ENCODE measurements at regions of chr17 and their contacts with region 1.

Region 1: DNA sequence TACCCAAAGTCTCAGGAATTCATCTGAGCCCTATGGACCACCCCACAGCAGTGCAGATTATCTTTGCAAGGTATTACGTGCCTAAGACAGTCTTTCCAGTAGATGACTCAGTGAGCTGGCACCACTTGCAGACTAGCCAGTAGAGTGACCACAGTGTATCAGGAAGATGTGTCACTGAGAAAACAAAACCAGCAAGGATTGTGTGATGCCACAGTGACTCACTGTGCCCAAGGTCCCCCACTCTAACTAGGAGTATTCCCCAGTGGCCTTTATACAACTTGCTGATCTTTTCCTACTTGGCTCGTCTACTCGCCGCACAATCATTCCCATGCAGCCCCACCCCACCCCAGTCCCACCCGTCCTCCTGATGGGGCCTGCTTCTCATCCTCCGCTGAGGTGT is 26.8 kb upstream of the PRKCA start:
- DNase-seq: peak; percentile 100
- ATAC-seq: peak; percentile 91
- H3K4me3 ChIP-seq: no peak overlapping the region; the same call in 1 of the 2 replicates
- H3K27ac ChIP-seq: peak overlapping the region; percentile 98
- H3K4me1 ChIP-seq: peaks cover 50% of the 10 kb centered on the region
- H3K27me3 ChIP-seq: no peaks in the 10 kb centered on the region
- CTCF ChIP-seq: no peak

Region 2: GRCh38 chr17:66043456-66043855 is 232.2 kb before region 1 on chr17:
- CTCF ChIA-PET with region 1: no interaction called
- POLR2A ChIA-PET with region 1: no interaction called
- intact Hi-C with region 1: no loop called
- DNase-seq: peak; percentile 4
- ATAC-seq: peak; percentile 90
- H3K4me3 ChIP-seq: no peak overlapping the region
- H3K27ac ChIP-seq: no peak overlapping the region
- H3K4me1 ChIP-seq: no peaks in the 10 kb centered on the region
- H3K27me3 ChIP-seq: no peaks in the 10 kb centered on the region
- CTCF ChIP-seq: no peak

Region 3: GRCh38 chr17:66255112-66255511 is 20.5 kb before region 1 on chr17:
- CTCF ChIA-PET with region 1: interaction called, 6 read pairs
- POLR2A ChIA-PET with region 1: no interaction called
- intact Hi-C with region 1: loop called (anchors 2 kb)
- DNase-seq: peak; percentile 93
- ATAC-seq: peak; percentile 94
- H3K4me3 ChIP-seq: no peak overlapping the region
- H3K27ac ChIP-seq: no peak overlapping the region
- H3K4me1 ChIP-seq: peaks cover 8% of the 10 kb centered on the region
- H3K27me3 ChIP-seq: no peaks in the 10 kb centered on the region
- CTCF ChIP-seq: peak; percentile 96

Region 4: DNA sequence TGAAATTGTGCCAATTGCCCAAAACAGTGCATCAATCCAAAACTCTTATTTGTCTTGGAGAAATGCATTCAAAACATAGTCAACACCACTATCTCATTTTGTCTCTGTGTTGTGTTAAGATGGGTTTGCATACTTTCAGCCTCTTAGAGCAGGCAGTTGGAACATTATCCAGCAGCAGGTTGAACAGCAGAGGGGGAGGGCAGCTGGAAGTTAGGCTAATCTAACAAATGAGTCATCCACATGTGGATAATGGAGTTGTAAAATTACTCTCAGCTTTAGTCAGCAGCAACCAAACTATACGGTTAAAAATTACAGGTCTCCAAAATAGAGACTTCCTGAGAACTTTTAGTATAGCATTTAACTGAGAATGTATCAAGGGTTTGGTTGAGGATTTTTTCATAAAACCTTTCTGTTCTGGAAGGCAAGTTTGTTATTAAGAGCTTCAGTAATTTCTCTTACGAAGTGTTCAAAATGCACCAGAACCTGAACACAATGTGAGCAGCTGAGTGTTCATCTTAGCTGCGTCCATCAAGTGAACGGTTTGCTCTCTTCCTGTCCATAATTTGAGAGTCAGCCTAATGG is 73.0 kb after region 1 on chr17:
- CTCF ChIA-PET with region 1: no interaction called
- POLR2A ChIA-PET with region 1: no interaction called
- intact Hi-C with region 1: loop called (anchors 2 kb)
- DNase-seq: peak; percentile 92
- ATAC-seq: peak; percentile 82
- H3K4me3 ChIP-seq: peak overlapping the region; percentile 51
- H3K27ac ChIP-seq: peak overlapping the region; percentile 90
- H3K4me1 ChIP-seq: peaks cover 62% of the 10 kb centered on the region
- H3K27me3 ChIP-seq: no peaks in the 10 kb centered on the region
- CTCF ChIP-seq: no peak

Region 5: DNA sequence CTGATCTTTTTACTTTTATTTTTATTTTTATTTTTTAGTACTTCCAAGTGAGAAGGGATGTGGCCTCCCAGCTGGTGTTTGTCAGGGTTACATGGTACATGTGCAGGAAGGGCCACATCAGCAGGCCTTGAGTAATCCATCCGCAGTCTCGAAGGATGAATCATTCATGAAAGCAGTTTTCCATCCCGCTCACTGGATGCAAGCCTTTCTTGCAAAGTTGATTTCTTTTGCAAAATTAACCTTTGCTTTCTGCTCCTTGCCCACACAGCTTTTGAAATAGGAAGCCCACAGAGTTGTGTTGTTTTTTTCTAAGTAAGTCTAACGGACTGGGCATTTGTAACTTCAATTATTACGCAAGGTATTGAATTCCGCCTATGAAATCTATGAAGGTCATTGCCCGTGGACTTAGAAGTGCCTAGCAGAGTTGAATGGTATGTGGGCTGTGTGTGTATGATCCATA is 184.2 kb after region 1 on chr17:
- CTCF ChIA-PET with region 1: no interaction called
- POLR2A ChIA-PET with region 1: no interaction called
- intact Hi-C with region 1: loop called (anchors 5 kb)
- DNase-seq: peak; percentile 97
- ATAC-seq: peak; percentile 91
- H3K4me3 ChIP-seq: peak overlapping the region; percentile 8; the same call in 1 of the 2 replicates
- H3K27ac ChIP-seq: peak overlapping the region; percentile 71
- H3K4me1 ChIP-seq: peaks cover 55% of the 10 kb centered on the region
- H3K27me3 ChIP-seq: no peaks in the 10 kb centered on the region
- CTCF ChIP-seq: no peak

Region 6: GRCh38 chr17:66523378-66524200 is 247.9 kb after region 1 on chr17:
- CTCF ChIA-PET with region 1: no interaction called
- POLR2A ChIA-PET with region 1: no interaction called
- intact Hi-C with region 1: loop called (anchors 1 kb)
- DNase-seq: no peak
- ATAC-seq: peak; percentile 84
- H3K4me3 ChIP-seq: no peak overlapping the region
- H3K27ac ChIP-seq: peak overlapping the region; percentile 84
- H3K4me1 ChIP-seq: peaks cover 38% of the 10 kb centered on the region
- H3K27me3 ChIP-seq: no peaks in the 10 kb centered on the region
- CTCF ChIP-seq: peak; percentile 17; the same call in 1 of the 2 replicates

Measured in PC-3 (cell line).